Posterior vena cava (tissue), 2 donors: ENCODE measurements at regions of chr2 and their contacts with region 1.

Region 1: DNA sequence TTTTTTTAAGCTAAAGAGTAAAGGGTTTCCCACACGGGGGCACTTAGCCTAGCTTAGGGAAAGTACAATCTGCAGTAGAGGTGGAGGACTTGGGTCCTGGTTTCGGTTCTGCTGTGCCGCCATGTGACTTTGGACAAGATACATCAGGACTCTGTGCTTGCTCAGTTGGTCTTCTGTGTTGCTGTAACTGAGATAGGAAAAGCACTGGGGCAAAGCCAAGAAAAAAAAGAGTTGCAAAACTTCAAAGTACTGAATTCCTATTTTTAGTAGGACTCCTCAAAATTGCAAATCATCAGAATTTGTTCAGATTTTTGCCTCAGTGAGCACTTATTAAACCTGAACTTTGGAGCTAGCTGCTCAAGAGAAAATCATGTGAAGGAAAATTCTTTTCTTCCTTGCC is 96.3 kb upstream of the STON1 start:
- DNase-seq: no peak

Region 2: GRCh38 chr2:47906157-47907038 is 527.3 kb before region 1 on chr2 and contains the start of gene FBXO11:
- intact Hi-C with region 1: loop called in 1 of 2 experiments (anchors 5 kb)
- DNase-seq: peak; percentile 98
- total RNA-seq, gene FBXO11: 61.2 to 64.6 TPM